Dorsolateral prefrontal cortex (tissue), 120 donors: ENCODE measurements at regions of chr4 and their contacts with region 1.

Region 1: DNA sequence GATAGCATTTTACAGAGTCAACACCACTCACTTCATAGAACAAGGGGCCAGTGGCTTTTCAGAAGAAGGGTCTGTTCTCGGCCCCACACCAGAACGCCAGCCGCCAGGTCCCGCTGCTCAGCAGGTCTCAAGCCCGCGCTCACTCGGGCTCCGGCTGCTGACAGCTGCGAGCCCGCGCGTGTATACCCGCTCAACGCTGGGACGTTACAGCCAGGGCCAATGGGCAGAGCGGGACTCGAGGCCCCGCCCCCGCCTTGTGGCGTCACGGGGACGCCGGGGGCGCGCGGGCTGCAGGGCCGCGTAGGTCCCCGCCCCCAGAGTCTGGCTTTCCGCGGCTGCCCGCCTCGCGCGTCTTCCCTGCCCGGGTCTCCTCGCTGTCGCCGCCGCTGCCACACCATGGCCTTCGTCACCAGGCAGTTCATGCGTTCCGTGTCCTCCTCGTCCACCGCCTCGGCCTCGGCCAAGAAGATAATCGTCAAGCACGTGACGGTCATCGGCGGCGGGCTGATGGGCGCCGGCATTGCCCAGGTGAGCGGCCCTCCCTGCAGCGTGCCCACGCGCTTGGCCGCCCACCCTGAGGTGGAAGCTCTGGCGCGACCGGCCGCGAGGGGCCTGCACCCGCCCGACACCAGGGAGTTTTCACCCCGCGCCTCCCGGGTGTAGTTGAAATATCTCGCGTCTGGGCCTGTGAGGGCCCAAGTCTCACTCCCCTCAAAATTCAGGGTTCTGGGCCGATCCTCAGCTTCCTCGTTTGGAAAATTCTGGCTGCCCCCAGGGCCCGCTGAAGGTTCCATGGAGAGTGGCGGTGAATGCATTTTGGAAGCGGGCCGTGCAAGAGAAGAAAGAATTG is at the start of gene HADH:
- DNase-seq: peak; percentile 89 to 98 (median 96)
- H3K4me3 ChIP-seq: peak within 1 kb of the TSS; percentile 66 to 99 (median 90)
- H3K27ac ChIP-seq: peak within 1 kb of the TSS; percentile 20 to 96 (median 87)
- H3K27me3 ChIP-seq: no peaks in the 10 kb centered on the region
- CTCF ChIP-seq: peak in 26 of 56 donors; percentile 3 to 40 (median 28)
- total RNA-seq, gene HADH: 23.3 to 43.1 (median 31.6) TPM

Region 2: DNA sequence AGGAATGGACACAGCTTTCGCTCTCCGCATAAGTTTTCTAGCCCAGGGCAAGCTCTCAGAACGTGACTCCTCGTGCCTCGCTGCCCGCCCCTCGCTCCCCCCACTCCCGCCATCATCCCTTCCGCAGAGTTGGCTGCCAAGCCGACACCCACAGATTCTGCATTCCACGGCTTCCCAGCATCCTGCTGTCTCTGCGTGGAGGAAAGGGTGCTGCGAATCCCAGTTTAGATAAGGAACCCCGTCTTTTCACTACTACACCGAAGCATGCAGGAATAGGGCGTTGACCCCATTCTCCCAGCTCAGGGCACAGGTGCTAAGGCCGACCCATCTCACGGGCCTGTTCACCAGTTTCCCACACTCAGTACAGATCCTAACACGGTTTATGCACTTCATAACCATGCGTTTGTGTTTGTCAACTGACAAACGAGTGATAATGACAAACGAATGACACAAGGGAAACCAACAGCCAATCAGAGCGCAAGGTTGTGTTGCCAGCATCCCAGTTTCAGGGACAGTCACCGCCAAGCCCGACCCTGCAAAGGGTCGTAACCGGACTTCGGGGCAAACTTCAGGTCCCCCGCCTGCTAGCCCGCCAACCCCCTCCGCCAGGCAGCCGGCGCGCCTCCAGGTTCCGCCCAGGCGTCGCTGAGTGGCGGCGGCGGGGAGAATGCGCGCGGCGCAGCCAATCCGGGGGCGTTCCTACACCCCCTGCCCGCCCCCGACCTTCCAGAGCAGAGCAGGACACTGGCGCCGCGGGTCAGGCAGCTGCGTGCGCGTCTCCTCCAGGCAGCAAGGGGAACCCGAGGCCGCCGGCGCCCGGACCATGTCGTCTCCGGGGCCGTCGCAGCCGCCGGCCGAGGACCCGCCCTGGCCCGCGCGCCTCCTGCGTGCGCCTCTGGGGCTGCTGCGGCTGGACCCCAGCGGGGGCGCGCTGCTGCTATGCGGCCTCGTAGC is 58.7 kb before region 1 on chr4 and contains the start of gene CYP2U1:
- intact Hi-C with region 1: loop called (anchors 1 to 5 kb)
- DNase-seq: peak; percentile 77 to 93 (median 86)
- H3K4me3 ChIP-seq: peak within 1 kb of the TSS; percentile 58 to 96 (median 84)
- H3K27ac ChIP-seq: peak within 1 kb of the TSS; percentile 37 to 94 (median 88)
- H3K27me3 ChIP-seq: no peaks in the 10 kb centered on the region
- CTCF ChIP-seq: peak in 41 of 56 donors; percentile 10 to 62 (median 35)
- total RNA-seq, gene CYP2U1: 9.1 to 23.6 (median 15.5) TPM

Region 3: DNA sequence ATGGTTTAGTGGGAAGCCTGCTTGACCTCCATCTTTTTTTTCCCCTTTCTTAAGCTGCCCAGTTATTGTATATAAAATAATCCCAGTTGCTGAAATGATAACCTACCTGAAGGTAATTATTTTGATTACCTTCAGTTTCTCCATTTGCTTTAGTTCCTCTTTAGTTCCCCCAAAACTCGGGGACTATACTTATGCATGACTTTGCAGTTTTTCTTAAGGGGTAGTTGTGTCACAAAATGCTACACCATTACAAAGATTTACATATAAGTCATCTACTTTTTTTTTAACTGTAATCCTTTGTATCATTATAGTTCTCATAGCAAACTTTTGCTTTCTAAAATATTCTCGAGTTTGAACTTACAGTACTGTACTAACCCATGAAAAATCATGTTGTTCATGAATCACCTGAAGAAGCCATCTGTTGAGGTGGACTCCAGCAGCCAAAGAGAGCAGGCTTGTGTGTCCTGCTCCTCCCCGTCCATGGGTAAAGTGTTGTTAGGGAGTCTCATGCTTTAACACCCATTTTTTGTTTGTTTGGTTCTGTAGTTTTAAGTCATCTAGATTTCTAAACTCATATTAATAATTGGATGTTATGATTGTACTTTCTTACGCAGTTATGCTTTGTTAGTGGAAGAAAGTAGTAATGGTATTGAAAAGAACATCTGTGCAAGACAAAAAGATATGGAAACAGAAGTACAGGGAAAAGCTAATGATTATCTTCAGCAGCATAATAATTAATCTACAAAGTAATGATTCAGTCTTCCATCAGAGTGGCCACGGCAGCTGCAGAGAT is 34.5 kb after region 1 on chr4:
- intact Hi-C with region 1: loop called in 1 of 2 experiments (anchors 5 kb)
- DNase-seq: no peak
- H3K4me3 ChIP-seq: no peak overlapping the region
- H3K27ac ChIP-seq: no peak overlapping the region
- H3K27me3 ChIP-seq: no peaks in the 10 kb centered on the region
- CTCF ChIP-seq: no peak